Tibial artery (tissue), 4 donors: ENCODE measurements at regions of chr1 and their contacts with region 1.

Region 1: GRCh38 chr1:208219659-208220282 is 24.4 kb downstream of the PLXNA2 start:
- DNase-seq: peak; percentile 66 to 86
- H3K4me3 ChIP-seq: no peak overlapping the region
- H3K27ac ChIP-seq: peak overlapping the region; percentile 79 to 82
- H3K4me1 ChIP-seq: peaks cover 0 to 74% (median 51%) of the 10 kb centered on the region in 4 donors
- H3K27me3 ChIP-seq: no peaks in the 10 kb centered on the region
- CTCF ChIP-seq: no peak

Region 2: DNA sequence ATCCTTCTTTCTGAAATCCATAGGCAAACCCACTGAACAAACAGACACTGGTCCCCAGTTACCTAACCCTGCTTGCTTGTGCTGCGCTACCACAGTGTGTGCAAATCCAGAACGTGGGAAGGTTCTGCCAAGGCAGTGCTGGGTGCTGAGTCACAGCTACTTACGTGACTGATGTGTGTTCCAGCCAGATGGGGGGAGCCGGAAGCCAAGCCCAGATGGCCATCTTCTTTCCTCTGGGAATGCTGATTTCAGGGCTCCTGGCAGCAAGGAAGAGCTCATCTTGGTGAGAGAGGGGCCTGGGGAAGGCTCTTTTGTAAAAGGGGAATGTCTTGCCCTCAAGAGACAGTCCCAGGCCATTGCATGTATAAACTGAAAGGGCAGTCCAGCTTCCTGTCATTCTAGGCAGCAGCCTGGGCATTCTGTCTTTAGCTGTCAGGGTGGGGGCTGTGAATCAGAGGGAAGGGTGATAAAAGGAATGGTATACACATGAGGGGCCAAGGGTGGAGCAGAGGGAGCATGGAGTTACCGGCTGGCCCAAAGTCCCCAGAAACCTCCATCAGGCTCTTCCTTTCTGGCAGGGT is 413.8 kb before region 1 on chr1:
- intact Hi-C with region 1: loop called (anchors 10 kb)
- DNase-seq: peak; percentile 91 to 96
- H3K4me3 ChIP-seq: no peak overlapping the region
- H3K27ac ChIP-seq: peak overlapping the region; percentile 85 to 100
- H3K4me1 ChIP-seq: peaks cover 0 to 71% (median 61%) of the 10 kb centered on the region in 4 donors
- H3K27me3 ChIP-seq: no peaks in the 10 kb centered on the region
- CTCF ChIP-seq: no peak